ENCODE measurements at regions of chrX and their contacts with region 1.

Region 1: DNA sequence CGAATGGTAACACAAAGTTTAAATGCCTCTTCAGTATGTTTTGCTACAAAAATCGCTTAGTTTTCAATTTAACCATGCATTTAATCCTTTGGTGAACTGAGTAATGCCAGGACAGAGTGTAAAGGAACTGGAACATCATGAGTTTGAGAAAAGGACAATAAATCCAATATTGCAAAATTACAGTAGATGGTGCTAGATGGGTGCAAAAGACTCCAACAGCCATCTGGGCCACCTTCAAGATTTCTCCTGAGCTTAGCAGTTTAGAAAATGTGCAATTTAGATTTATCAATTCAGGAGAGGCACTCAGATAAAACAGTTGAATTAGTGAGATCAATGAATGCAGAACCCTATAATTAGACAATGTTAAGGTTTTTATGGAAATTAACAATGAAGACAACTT is 33.2 kb upstream of the MID1IP1 start:
- DNase-seq: peak; percentile 18
- CTCF ChIP-seq: no peak

Region 2: GRCh38 chrX:38365954-38366353 is 402.1 kb before region 1 on chrX:
- in situ Hi-C with region 1: no loop called
- DNase-seq: no peak
- CTCF ChIP-seq: no peak

Region 3: DNA sequence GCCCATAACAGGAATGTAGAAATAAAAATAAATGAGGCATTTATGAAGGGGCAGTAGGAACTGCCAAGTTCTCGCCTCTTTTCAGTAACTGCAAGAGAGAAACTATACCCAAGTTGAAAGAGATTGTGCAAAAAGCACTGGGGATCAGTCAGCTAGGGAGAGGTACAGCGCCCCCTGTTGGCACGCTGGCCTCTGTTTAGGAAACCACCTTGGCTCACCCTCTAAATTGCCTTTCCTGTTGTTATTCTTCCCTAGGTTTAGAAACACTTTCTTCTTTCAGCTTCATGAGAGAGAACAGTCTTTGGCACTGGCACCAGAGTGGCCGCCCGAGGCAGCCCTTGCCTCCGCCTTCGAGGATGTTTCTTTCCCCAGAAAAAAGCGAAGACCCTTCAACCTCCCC is 381.7 kb after region 1 on chrX:
- in situ Hi-C with region 1: loop called (anchors 10 kb)
- DNase-seq: peak; percentile 42
- CTCF ChIP-seq: peak; percentile 55

Region 4: DNA sequence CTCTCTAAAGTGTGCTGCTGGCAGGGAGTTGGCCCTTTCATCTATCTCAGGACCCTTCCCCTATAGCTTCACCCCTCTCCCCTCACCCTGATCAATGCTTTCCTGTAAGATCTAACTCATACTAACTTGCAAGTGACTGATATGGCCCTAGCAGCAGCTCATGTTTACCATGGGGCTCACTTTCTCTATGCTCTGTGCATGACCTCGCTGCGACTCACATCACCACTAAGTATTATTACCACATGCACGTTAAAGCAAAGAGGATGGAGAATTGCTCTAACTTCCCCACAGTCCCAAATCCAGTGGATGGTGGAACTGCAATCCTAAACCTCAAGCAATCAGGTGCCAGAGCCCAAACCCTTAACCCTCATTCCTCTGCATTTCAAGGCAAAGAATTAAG is 659.8 kb after region 1 on chrX:
- in situ Hi-C with region 1: no loop called
- DNase-seq: no peak
- CTCF ChIP-seq: no peak

Measured in GM13976 (cell line).